Breast epithelium (tissue), 4 donors: ENCODE measurements at regions of chr4 and their contacts with region 1.

Region 1: DNA sequence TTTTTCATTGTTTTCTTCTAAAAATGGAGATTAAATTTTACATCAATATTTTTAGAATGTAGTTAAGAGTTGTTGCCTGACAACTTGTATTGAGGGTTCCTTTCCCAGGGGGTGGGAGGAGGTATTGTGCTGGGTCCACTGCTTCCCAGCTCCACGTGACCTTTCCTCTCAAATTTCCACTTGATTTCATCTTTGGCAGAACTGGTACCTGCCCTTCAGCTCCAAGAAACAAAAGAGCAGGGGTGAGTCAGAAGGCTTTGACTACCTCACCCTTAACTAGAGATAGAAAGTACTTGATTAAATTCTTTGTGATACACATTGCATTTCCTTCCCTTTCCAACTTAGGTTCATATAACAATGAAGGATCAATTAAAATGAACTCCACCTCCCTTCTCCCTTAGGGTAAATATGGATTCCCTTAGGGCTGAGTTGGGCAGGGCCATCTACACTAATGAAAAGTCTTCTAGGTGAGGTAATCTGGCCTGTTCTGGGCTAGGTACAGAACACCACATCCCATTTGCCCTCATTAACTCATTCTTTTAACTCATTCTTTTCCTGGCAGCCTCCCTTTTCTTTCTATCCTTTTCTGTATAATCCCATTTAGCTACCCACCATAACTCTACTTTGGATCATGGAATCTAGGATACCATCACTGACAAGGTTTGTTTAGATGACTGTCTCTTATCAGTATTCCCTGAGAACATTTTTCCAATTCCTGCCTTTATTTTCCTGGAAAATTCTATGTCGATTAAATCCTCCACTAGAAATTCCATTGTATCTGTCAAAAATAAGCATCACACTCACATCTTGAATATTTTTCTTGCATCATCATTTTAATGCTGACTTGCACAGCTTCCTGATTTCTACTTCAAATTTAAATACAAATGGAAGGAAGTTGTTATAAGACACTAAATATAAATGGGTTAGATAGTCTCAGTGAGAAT is 20.0 kb downstream of the TRIM2 start:
- DNase-seq: no peak
- H3K4me3 ChIP-seq: peak overlapping the region; percentile 60 to 79 (median 78)
- H3K27ac ChIP-seq: peak overlapping the region; percentile 93 to 94
- H3K4me1 ChIP-seq: peaks cover 0 to 4% of the 10 kb centered on the region in 2 donors
- H3K27me3 ChIP-seq: no peaks in the 10 kb centered on the region
- CTCF ChIP-seq: no peak
- POLR2A ChIP-seq: no peak

Region 2: DNA sequence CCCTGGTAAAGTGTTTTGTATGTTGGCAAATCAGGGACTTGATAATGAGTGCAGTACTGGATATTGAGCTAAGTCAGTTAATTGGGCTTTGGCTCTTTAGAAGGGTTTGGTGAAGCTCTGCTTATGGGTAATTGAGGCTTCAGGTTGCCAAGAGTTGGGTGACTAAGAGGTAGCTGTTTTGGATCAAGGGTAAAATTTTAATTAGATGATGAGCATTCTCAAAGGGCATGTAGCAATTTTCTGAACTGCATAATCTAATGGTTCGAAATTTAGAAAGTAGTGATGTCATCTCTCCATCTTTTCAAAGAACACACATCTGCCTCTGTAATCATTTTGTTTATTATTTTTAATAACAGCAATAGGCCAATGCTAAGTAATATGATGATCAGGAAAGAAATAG is 25.5 kb before region 1 on chr4:
- intact Hi-C with region 1: no loop called
- DNase-seq: no peak
- H3K4me3 ChIP-seq: no peak overlapping the region
- H3K27ac ChIP-seq: no peak overlapping the region
- H3K4me1 ChIP-seq: no peaks in the 10 kb centered on the region
- H3K27me3 ChIP-seq: no peaks in the 10 kb centered on the region
- CTCF ChIP-seq: no peak
- POLR2A ChIP-seq: no peak

Region 3: DNA sequence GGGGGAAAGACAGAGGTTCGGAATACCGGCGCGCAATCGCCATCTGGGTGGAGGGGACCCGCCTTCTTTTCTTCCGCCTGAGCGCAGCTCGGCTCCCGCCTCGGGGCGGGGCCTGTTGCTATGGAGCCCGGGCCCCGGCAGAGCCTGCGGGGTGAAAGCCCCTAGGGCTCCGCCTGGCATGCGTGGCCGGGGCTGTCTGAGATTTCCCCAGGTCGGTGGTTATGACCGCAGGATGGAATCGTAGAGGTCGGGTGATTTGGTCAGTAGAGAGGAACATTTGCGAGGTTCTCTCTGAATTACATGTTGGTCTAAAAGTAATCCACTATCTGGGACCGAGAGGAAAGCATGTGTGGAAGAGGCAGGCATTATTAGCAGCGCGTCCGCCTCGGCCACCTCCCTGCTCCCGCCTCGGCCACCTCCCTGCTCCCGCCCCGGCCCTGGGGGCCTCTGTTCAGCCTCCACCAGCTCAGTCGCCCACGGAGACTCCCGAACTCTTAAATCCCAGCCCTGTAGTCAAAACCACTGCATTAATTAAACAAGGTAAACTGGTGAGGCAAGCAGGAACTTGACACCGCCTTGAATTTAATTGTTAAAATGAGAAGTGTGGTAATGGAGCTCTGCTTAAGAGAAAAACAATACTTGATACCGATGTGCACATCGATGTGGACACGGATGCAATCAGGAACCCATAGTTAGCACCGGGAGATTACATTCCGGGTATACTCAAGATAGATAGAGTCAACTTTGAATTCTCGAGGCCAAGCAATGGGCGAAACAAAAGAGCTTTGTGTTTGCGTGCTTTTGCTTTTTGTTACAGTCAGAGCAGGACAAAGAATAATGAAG is 25.2 kb after region 1 on chr4:
- intact Hi-C with region 1: loop called (anchors 1 kb)
- DNase-seq: peak; percentile 55 to 62
- H3K4me3 ChIP-seq: peak overlapping the region; percentile 45 to 68 (median 60)
- H3K27ac ChIP-seq: peak overlapping the region; percentile 87 to 92
- H3K4me1 ChIP-seq: no peaks in the 10 kb centered on the region
- H3K27me3 ChIP-seq: no peaks in the 10 kb centered on the region
- CTCF ChIP-seq: no peak
- POLR2A ChIP-seq: no peak

Region 4: DNA sequence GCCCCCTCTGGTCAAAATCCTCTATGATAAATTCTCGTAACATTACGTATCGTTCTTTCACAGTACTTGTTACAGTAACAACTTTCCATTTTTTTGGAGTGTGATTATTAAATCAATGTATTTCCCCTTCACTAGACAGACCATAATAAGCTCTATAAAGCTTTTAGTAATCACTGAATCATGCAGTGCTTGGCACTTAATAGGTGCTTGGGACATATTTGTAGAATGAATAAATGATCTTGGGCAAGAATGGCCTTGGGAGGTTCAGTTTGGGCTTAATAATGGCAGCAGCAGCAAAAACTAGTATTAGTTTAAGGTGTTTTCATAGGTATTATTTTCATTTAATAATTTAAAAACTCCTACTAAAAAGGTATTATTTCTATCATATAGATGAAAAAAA is 598.1 kb after region 1 on chr4:
- intact Hi-C with region 1: no loop called
- DNase-seq: no peak
- H3K4me3 ChIP-seq: no peak overlapping the region
- H3K27ac ChIP-seq: no peak overlapping the region
- H3K4me1 ChIP-seq: no peaks in the 10 kb centered on the region
- H3K27me3 ChIP-seq: no peaks in the 10 kb centered on the region
- CTCF ChIP-seq: no peak
- POLR2A ChIP-seq: no peak